ENCODE measurements at regions of chr3 and their contacts with region 1.

Region 1: GRCh38 chr3:97559388-97559787 is 205.2 kb upstream of the ARL6 start:
- DNase-seq: no peak
- H3K4me3 ChIP-seq: no peak overlapping the region
- H3K27ac ChIP-seq: no peak overlapping the region
- H3K4me1 ChIP-seq: no peaks in the 10 kb centered on the region
- H3K27me3 ChIP-seq: no peaks in the 10 kb centered on the region
- CTCF ChIP-seq: no peak
- EP300 ChIP-seq: no peak
- POLR2A ChIP-seq: no peak

Region 2: GRCh38 chr3:96813134-96813819 is 746.1 kb before region 1 on chr3:
- in situ Hi-C with region 1: no loop called
- intact Hi-C with region 1: no loop called
- DNase-seq: peak; percentile 61
- H3K4me3 ChIP-seq: peak overlapping the region; percentile 10 to 57 (median 42)
- H3K27ac ChIP-seq: peak overlapping the region; percentile 68 to 87 (median 72)
- H3K4me1 ChIP-seq: peaks cover 0 to 26% (median 10%) of the 10 kb centered on the region in 4 donors
- H3K27me3 ChIP-seq: peaks cover 60% of the 10 kb centered on the region
- CTCF ChIP-seq: peak; percentile 22 to 46 (median 37)
- EP300 ChIP-seq: no peak
- POLR2A ChIP-seq: no peak

Region 3: DNA sequence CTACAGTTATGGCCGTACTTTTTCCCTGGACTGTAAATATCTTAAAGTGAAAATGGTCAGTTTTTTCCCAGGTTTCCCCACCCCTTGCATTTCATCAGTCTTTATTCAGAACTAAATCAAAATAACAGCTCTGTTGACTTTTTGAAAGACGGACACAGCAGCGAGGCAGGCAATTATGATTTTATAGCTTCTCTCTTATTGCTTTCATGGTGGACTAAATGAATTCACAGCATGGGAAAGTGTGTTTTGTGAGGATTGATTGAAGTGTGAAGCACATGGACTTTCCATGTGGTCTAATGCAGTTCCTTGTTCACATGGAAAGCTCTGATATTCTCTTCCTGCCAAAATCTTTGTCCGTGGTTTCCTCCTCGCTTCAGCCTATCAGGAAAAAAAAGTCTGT is 63.5 kb before region 1 on chr3:
- in situ Hi-C with region 1: no loop called
- intact Hi-C with region 1: loop called (anchors 2 kb)
- DNase-seq: no peak
- H3K4me3 ChIP-seq: no peak overlapping the region
- H3K27ac ChIP-seq: no peak overlapping the region
- H3K4me1 ChIP-seq: no peaks in the 10 kb centered on the region
- H3K27me3 ChIP-seq: no peaks in the 10 kb centered on the region
- CTCF ChIP-seq: no peak
- EP300 ChIP-seq: no peak
- POLR2A ChIP-seq: no peak

Measured in transverse colon (tissue), 4 donors.